MCF 10A (cell line): ENCODE measurements at regions of chr1 and their contacts with region 1.

Region 1: DNA sequence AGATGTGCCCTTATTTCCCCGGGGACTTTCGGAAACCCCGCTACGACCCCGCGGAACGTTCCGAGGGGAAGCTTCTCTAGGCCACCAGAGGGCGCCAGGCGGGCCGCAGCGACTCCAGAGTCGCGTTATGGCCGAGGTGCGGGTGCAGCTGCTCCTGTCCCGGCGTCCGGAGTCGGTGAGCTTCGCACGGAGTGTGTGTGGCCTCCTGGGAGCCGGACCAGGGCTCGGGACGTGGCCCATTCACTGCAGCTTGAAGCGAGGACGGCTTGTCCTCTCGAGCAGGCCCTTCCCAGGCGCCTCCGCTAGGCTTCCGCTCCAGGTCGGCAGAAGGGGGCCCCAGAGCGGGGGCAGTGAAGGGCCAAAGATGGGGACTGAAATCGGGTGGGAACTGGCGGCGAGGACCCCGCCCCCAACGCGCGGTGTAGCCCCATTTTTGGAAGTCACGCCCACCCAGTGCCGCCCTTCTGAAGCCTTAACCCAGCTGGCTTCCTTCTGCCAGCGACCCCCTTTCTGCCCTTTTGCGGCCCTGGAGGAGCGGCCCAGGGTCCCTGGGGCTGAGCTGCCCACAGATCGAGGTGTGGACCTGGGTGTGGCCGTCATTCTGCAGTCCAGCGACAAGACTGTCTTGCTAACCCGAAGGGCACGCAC is at the start of gene NUDT17:
- DNase-seq: peak; percentile 81
- H3K4me3 Mint-ChIP-seq: no peak within 1 kb of the TSS
- H3K27ac Mint-ChIP-seq: peak within 1 kb of the TSS; percentile 67
- H3K4me1 Mint-ChIP-seq: peaks cover 12% of the 10 kb centered on the region
- H3K27me3 Mint-ChIP-seq: no peaks in the 10 kb centered on the region
- CTCF ChIP-seq: peak; percentile 100
- total RNA-seq, gene NUDT17: 3.7 and 4.6 TPM in 2 replicates

Region 2: DNA sequence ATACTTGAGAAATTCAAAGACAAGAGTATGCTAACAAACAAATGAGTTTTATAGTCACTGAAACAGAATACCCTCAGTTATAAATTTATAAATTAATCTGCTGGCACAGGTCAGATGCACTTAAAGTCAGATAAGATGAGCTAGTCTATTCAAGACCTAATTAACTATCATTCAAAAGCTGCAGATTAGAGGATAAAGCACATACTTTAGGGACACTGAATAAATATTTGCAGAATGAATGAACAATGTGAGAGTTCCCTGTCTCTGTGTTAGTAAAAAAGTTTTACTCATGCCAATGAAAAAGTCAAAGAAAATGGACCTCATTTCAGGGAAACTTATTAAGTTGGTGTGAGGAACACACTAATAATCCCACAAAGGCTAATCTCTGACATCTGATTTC is 80.1 kb before region 1 on chr1:
- CTCF ChIA-PET with region 1: no interaction called
- POLR2A ChIA-PET with region 1: no interaction called
- intact Hi-C with region 1: no loop called
- DNase-seq: no peak
- H3K4me3 Mint-ChIP-seq: no peak overlapping the region
- H3K27ac Mint-ChIP-seq: no peak overlapping the region
- H3K4me1 Mint-ChIP-seq: no peaks in the 10 kb centered on the region
- H3K27me3 Mint-ChIP-seq: no peaks in the 10 kb centered on the region
- CTCF ChIP-seq: no peak

Region 3: DNA sequence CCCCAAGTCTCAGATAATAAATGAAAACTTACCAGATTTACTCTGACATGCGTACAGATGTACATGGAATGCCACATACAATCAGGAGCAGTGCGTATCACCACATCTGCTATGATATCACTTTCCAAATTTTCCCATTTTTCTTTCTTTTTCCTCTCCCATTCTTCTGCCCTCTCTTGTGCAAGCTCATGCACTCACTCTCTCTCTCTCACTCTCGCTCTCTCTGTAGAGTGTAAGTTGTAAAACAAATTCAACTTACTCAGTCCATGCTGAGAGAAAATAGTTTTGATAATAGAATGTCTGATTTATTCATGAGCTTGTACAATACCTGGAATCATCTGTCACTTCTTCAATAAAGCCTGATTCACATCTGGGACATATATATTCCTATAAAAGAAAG is 57.1 kb before region 1 on chr1:
- CTCF ChIA-PET with region 1: interaction called, 13 read pairs
- POLR2A ChIA-PET with region 1: interaction called, 3 read pairs
- intact Hi-C with region 1: no loop called
- DNase-seq: no peak
- H3K4me3 Mint-ChIP-seq: no peak overlapping the region
- H3K27ac Mint-ChIP-seq: no peak overlapping the region
- H3K4me1 Mint-ChIP-seq: peaks cover 22% of the 10 kb centered on the region
- H3K27me3 Mint-ChIP-seq: no peaks in the 10 kb centered on the region
- CTCF ChIP-seq: no peak

Region 4: DNA sequence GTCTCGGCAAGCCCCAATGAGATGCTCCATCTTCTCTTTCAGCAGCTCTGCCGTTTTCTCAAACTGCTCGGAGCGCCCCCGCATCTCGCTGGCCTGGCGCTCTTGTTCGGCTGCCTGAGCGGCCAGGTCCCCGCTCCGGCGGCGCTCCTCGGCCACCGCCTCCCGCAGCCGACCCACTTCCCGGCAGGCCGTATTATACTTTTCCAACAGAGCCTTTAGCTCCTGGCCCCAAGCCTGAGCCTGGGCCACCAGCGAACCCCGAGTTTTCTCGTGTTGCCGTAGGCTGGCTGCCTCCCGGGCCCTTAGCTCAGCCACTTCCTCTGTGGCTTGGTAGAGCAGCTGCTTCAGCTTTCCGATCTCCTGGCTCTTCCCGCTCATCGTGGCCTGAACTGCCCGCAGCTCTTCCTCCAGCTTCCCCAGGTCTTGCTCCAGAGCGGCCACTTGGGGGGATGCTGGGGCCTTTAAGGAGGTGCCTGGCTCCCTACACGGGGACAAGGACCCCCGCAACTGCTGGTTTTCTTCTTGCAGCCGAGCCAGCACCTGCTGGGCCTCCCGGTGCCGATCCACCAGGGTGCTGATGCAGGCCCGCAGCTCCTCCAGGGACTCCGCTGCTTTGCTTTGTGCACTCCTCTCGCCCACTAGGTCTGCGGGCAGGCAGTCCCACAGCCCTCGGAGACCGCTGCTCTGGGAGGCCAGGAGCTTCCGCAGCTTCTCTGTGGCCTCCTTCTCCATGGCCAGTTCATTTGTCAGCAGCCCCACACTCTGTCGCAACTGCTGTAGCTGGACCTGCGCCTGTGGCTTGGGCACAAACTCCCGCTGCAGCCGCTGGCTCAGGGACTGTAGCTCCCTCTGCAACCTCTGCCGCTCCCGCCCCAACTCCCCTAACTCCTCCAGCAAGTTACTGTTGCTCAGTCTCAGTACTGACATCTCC is 26.6 kb after region 1 on chr1:
- CTCF ChIA-PET with region 1: interaction called, 14 read pairs
- POLR2A ChIA-PET with region 1: interaction called, 3 read pairs
- intact Hi-C with region 1: no loop called
- DNase-seq: no peak
- H3K4me3 Mint-ChIP-seq: no peak overlapping the region
- H3K27ac Mint-ChIP-seq: no peak overlapping the region
- H3K4me1 Mint-ChIP-seq: no peaks in the 10 kb centered on the region
- H3K27me3 Mint-ChIP-seq: peaks cover 11% of the 10 kb centered on the region
- CTCF ChIP-seq: no peak

Region 5: DNA sequence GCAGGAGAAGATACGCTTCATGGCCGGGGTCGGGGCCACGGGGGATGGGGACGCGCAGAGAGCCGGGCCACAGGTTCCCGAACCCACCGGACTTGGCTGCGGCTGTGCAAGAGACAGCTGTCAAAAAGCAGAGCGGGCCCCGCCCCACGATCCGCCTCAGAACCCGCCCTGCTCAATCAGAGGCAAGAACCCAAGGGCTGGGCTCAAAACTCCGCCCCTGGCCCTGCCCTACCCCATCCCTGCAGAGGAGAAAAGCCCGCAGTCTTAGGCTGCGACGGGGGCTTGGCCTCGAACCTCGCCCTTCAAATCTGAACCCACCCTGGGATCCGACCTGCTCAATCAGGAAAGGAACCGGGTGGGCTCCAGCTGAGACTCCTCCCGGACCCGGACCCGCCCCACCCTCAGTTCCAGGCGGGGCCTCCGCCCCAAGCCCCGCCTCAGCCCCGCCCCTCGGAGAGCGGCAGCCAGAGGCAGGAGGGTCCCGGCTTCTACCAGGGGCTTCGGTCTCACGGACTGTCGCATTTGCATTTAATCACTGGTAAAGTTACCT is 40.2 kb after region 1 on chr1 and contains the start of gene ANKRD35:
- CTCF ChIA-PET with region 1: interaction called, 92 read pairs
- POLR2A ChIA-PET with region 1: interaction called, 31 read pairs
- intact Hi-C with region 1: no loop called
- DNase-seq: peak; percentile 87
- H3K4me3 Mint-ChIP-seq: peak within 1 kb of the TSS; percentile 81
- H3K27ac Mint-ChIP-seq: no peak within 1 kb of the TSS
- H3K4me1 Mint-ChIP-seq: peaks cover 19% of the 10 kb centered on the region
- H3K27me3 Mint-ChIP-seq: peaks cover 12% of the 10 kb centered on the region
- CTCF ChIP-seq: no peak
- total RNA-seq, gene ANKRD35: 0.29 TPM in 1 of 2 replicates, not detected in the other

Region 6: DNA sequence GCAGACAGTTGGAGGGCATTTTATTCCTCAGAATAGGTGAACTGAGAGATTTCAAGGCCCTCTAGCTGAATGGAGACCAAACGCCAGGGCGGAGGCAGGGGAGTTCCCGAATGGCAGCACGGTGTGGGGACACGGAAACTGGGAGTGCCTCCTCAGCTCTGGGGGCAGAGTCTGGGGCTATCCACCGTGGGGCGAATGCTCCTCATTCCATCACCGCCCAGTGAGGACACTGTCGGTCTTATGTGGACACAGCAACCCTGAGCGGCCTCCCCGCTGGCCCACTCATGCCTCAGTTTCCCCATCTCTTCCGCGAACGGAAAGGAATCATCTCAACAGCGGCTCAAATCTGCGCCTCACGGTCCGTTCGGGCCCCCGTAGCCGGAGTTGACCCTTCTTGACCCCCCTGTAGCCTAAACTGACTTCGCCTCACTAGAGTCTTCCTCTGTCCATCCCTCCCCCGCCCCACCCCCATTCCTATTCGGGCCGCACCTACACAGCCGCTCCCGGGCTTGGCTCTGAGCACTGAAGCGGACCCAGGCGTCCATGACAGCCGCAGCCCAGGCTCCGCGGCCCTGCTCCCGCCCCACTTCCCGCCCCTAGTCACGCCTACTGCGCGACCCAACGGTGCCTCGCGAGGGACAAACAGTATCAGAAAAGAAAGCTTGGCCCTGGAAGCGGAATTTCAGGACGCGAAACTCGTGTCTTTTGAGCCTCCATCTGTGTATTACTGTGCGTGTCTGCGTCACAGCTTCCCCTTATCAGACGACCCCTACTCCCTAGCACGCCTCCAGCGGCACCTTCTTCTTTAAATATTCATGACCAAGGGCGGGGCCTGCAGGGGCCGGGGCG is 72.7 kb after region 1 on chr1 and contains the start of gene PEX11B:
- CTCF ChIA-PET with region 1: interaction called, 11 read pairs
- POLR2A ChIA-PET with region 1: interaction called, 7 read pairs
- intact Hi-C with region 1: no loop called
- DNase-seq: peak; percentile 92
- H3K4me3 Mint-ChIP-seq: peak within 1 kb of the TSS; percentile 94
- H3K27ac Mint-ChIP-seq: peak within 1 kb of the TSS; percentile 99
- H3K4me1 Mint-ChIP-seq: peaks cover 43% of the 10 kb centered on the region
- H3K27me3 Mint-ChIP-seq: no peaks in the 10 kb centered on the region
- CTCF ChIP-seq: no peak
- total RNA-seq, gene PEX11B: 35.5 and 36.2 TPM in 2 replicates

Region 7: DNA sequence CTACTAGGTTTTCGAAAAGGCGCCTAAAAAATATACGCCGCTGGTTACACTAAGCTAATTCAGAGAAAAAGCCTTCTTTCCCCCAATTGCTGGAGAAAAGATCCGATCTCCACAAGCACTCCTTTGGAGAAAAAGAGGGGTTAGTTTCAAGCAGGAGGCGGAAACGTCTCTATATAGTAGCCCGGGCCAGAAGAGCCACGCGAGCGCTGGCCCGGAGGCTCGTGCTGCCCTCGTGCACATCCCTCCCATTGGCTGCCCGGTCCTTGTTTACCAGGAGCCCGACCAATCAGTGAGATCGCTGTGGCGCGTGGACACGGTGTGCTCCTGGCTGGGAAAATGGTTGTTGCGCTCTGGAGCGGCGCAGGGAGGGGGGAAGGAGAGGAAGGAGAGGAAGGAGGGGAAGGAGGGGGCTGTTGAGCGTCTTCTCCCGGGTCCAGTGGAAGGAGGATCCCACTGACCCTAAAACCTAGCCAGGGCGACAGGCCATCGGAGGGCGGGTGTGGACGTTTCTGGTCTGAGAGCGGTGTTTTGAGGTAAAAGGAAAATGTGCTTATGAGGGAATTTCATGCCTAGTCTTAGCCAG is 150.9 kb after region 1 on chr1 and contains the start of gene TXNIP:
- CTCF ChIA-PET with region 1: interaction called, 5 read pairs
- POLR2A ChIA-PET with region 1: interaction called, 15 read pairs
- intact Hi-C with region 1: no loop called
- DNase-seq: peak; percentile 99
- H3K4me3 Mint-ChIP-seq: peak within 1 kb of the TSS; percentile 89
- H3K27ac Mint-ChIP-seq: peak within 1 kb of the TSS; percentile 95
- H3K4me1 Mint-ChIP-seq: peaks cover 51% of the 10 kb centered on the region
- H3K27me3 Mint-ChIP-seq: no peaks in the 10 kb centered on the region
- CTCF ChIP-seq: no peak
- total RNA-seq, gene TXNIP: 576 and 599 TPM in 2 replicates

Region 8: GRCh38 chr1:146019231-146020057 is 173.8 kb after region 1 on chr1:
- CTCF ChIA-PET with region 1: interaction called, 24 read pairs
- POLR2A ChIA-PET with region 1: interaction called, 3 read pairs
- intact Hi-C with region 1: no loop called
- DNase-seq: no peak
- H3K4me3 Mint-ChIP-seq: no peak overlapping the region
- H3K27ac Mint-ChIP-seq: no peak overlapping the region
- H3K4me1 Mint-ChIP-seq: peaks cover 5% of the 10 kb centered on the region
- H3K27me3 Mint-ChIP-seq: peaks cover 23% of the 10 kb centered on the region
- CTCF ChIP-seq: no peak